ENCODE measurements at regions of chr10 and their contacts with region 1.

Region 1: GRCh38 chr10:14332903-14333302 is 2.2 kb upstream of the FRMD4A start:
- DNase-seq: no peak
- H3K4me3 ChIP-seq: no peak overlapping the region
- H3K27ac ChIP-seq: no peak overlapping the region
- H3K4me1 ChIP-seq: no peaks in the 10 kb centered on the region
- H3K27me3 ChIP-seq: no peaks in the 10 kb centered on the region
- CTCF ChIP-seq: no peak
- EP300 ChIP-seq: no peak
- POLR2A ChIP-seq: no peak

Region 2: DNA sequence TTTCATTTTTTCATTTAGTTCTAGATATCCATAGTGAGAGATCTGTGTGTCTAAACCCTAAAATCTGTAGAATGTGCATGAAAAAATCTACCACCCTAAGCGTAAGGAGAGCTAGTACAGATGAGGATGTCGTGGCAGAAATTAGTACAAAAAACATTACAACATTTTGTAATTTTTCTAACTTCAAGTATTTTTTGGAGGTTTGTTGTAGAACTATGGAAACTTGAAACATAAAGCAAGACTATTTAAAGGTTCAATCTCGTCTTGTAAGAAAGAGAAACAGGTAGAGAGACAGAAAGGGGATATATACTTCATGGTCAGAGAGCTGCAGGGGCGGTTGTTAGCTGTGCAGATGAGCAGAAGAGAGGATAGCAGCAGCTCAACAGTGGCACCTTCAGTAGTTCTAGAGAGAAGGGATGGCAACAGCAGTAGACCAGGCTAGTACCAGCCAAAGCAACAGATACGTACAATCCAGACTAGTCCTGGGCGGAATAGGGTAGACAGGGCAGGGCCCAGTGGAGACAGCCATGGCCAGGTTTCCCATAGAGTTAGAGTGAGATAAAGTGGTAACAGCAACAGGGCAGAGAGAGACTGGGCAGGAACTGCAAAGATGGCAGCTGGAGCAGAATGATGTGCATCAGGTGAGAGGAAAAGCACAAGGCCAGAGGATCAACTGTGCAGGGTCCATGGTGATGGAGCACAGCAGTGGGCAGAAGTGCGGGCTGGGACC is 147.4 kb before region 1 on chr10:
- intact Hi-C with region 1: no loop called
- DNase-seq: no peak
- H3K4me3 ChIP-seq: no peak overlapping the region
- H3K27ac ChIP-seq: no peak overlapping the region
- H3K4me1 ChIP-seq: no peaks in the 10 kb centered on the region
- H3K27me3 ChIP-seq: no peaks in the 10 kb centered on the region
- CTCF ChIP-seq: no peak
- EP300 ChIP-seq: no peak
- POLR2A ChIP-seq: no peak

Region 3: DNA sequence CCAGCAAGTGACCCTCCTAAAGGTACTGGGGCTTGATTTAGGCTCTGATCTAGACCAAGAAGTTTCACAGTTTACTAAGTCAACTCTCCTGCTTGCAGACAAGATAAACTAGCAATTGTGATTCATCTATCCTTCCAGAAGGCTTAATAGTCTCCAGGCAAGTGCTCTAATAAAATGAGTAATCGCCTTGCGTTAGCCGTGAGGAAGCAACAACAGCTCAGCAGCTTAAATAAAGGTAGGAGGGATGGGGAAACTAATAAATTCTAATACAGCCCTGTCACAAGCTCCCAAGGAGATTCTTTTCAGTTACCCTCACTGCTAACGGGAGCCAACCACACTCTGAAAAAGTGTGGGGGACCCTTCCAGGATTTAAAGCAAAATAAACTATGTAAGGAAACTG is 50.6 kb before region 1 on chr10:
- intact Hi-C with region 1: loop called in 1 of 4 experiments (anchors 2 kb)
- DNase-seq: no peak
- H3K4me3 ChIP-seq: no peak overlapping the region
- H3K27ac ChIP-seq: no peak overlapping the region
- H3K4me1 ChIP-seq: no peaks in the 10 kb centered on the region
- H3K27me3 ChIP-seq: no peaks in the 10 kb centered on the region
- CTCF ChIP-seq: no peak
- EP300 ChIP-seq: no peak
- POLR2A ChIP-seq: no peak

Region 4: DNA sequence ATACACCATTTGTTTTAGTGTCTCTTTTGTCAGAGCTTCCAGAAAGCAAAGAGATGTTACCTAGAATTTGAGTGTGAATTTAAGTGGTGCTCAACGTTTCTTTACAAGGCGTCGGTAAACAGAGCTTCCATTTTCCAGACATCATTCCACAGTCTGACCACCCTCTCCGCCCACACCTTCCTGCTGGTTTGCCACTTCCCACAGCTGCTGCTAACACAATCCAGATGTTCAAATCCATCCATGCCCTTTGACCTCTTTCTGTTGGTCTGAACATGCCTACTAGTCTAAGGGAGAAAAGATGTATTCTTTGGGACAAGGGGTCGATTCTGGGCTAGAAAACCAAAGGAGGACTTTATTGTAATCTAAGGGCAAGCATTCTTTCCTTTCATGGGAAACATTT is 355.7 kb after region 1 on chr10:
- intact Hi-C with region 1: no loop called
- DNase-seq: no peak
- H3K4me3 ChIP-seq: no peak overlapping the region
- H3K27ac ChIP-seq: no peak overlapping the region
- H3K4me1 ChIP-seq: no peaks in the 10 kb centered on the region
- H3K27me3 ChIP-seq: no peaks in the 10 kb centered on the region
- CTCF ChIP-seq: no peak
- EP300 ChIP-seq: no peak
- POLR2A ChIP-seq: no peak

Measured in ovary (tissue), 10 donors.